ENCODE measurements at regions of chr10 and their contacts with region 1.

Region 1: GRCh38 chr10:75099952-75100763 is 11.3 kb upstream of the SAMD8 start:
- DNase-seq: peak; percentile 75 to 91 (median 89)
- H3K4me3 ChIP-seq: no peak overlapping the region
- H3K27ac ChIP-seq: peak overlapping the region in 1 of 2 donors; percentile 69
- H3K4me1 ChIP-seq: peaks cover 1% of the 10 kb centered on the region
- H3K27me3 ChIP-seq: no peaks in the 10 kb centered on the region
- CTCF ChIP-seq: peak; percentile 99
- EP300 ChIP-seq: no peak
- POLR2A ChIP-seq: no peak

Region 2: DNA sequence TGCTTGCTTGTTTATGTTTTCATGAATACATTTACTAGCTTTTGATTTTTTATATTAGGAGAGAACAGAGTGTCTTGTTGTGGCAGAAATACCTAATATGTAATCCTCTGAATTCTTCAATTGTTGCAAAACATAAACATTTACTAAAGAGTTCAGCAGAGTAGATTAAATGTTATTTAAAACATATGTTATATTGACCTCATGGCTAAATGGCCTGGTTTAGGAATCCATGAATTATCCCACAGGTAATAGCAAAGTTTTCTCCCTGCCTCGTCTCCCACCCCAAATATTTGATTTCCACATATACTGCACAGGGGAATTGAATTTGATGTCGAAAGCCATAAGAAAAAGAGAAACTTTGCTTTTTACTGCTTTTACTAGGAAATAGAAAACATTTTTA is 837.3 kb before region 1 on chr10:
- intact Hi-C with region 1: loop called (anchors 1 to 5 kb)
- DNase-seq: no peak
- H3K4me3 ChIP-seq: no peak overlapping the region
- H3K27ac ChIP-seq: no peak overlapping the region
- H3K4me1 ChIP-seq: peaks cover 2% of the 10 kb centered on the region
- H3K27me3 ChIP-seq: no peaks in the 10 kb centered on the region
- CTCF ChIP-seq: no peak
- EP300 ChIP-seq: no peak
- POLR2A ChIP-seq: no peak

Region 3: DNA sequence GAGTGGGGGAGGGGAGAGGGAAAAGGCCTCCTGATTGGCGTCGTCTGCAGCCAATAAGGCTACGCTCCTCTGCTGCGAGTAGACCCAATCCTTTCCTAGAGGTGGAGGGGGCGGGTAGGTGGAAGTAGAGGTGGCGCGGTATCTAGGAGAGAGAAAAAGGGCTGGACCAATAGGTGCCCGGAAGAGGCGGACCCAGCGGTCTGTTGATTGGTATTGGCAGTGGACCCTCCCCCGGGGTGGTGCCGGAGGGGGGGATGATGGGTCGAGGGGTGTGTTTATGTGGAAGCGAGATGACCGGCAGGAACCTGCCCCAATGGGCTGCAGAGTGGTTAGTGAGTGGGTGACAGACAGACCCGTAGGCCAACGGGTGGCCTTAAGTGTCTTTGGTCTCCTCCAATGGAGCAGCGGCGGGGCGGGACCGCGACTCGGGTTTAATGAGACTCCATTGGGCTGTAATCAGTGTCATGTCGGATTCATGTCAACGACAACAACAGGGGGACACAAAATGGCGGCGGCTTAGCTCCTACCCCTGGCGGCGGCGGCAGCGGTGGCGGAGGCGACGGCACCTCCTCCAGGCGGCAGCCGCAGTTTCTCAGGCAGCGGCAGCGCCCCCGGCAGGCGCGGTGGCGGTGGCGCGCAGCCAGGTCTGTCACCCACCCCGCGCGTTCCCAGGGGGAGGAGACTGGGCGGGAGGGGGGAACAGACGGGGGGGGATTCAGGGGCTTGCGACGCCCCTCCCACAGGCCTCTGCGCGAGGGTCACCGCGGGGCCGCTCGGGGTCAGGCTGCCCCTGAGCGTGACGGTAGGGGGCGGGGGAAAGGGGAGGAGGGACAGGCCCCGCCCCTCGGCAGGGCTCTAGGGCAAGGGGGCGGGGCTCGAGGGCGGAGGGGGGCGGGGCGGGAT is 273.8 kb before region 1 on chr10 and contains the start of gene KAT6B:
- intact Hi-C with region 1: loop called in 1 of 4 experiments (anchors 10 kb)
- DNase-seq: peak; percentile 100
- H3K4me3 ChIP-seq: peak within 1 kb of the TSS; percentile 98
- H3K27ac ChIP-seq: peak within 1 kb of the TSS; percentile 97 to 100
- H3K4me1 ChIP-seq: peaks cover 10% of the 10 kb centered on the region
- H3K27me3 ChIP-seq: no peaks in the 10 kb centered on the region
- CTCF ChIP-seq: peak; percentile 21 to 40 (median 30)
- EP300 ChIP-seq: peak; percentile 45
- POLR2A ChIP-seq: peak; percentile 66
- total RNA-seq, gene KAT6B: 43.1 to 61.6 (median 52.1) TPM

Region 4: DNA sequence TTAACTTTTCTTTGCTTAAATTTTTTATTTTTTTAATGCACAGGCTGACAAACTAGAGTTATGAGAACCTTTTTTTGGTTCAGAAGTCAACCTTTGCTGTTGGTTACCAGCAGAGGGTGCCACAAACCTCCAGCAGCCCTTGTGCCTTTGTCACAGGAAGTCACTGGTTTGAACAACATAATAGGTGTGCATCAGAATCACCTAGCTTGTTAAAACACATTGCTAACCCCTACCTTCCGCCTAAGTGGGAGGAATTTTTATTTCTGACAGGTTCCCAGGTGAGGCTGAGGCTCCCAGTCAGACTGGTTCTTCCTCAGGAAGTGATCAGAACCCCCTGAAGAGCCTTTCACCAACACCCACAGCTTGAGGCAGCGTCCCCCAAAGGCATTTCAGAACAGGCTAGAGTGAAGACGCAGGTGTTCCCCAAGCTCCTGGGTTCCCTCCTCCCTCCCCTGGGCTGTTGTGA is 87.8 kb after region 1 on chr10:
- intact Hi-C with region 1: loop called in 1 of 4 experiments (anchors 10 kb)
- DNase-seq: peak in 1 of 5 donors; percentile 46
- H3K4me3 ChIP-seq: no peak overlapping the region
- H3K27ac ChIP-seq: no peak overlapping the region
- H3K4me1 ChIP-seq: peaks cover 4% of the 10 kb centered on the region
- H3K27me3 ChIP-seq: no peaks in the 10 kb centered on the region
- CTCF ChIP-seq: peak; percentile 18 to 55 (median 40)
- EP300 ChIP-seq: no peak
- POLR2A ChIP-seq: no peak